CD4-positive, alpha-beta T cell (primary cell): ENCODE measurements at regions of chr1 and their contacts with region 1.

Region 1: GRCh38 chr1:113759333-113760101 is at the start of gene PHTF1:
- DNase-seq: peak; percentile 20 to 82 (median 46)
- ATAC-seq: peak; percentile 68
- H3K4me3 ChIP-seq: peak within 1 kb of the TSS; percentile 91
- H3K4me3 Mint-ChIP-seq: peak within 1 kb of the TSS; percentile 95
- H3K27ac ChIP-seq: peak within 1 kb of the TSS; percentile 57 to 81
- H3K27ac Mint-ChIP-seq: peak within 1 kb of the TSS; percentile 80
- H3K4me1 ChIP-seq: peaks cover 20% of the 10 kb centered on the region
- H3K4me1 Mint-ChIP-seq: peaks cover 41% of the 10 kb centered on the region
- H3K27me3 ChIP-seq: no peaks in the 10 kb centered on the region
- H3K27me3 Mint-ChIP-seq: no peaks in the 10 kb centered on the region
- CTCF ChIP-seq: no peak
- total RNA-seq, gene PHTF1: 3.1 to 4.0 TPM

Region 2: DNA sequence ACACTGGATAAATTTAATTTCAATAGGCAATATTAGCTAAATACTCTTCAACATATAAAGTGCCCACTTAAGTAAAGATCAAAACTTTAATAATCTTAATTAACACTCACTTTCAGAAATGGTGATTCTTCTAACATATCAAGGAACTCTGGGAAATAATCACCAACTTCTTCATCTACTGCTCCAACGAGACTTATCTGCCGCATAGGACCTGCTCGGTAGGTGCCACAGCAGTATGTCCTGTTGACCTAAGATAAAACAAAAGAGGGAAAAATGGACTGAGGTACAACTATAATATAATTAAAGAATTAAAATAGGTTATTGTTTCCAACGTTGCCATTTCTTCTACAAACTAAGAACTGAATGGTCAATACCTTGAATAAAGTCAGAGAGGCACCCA is 18.0 kb after region 1 on chr1:
- CTCF ChIA-PET with region 1: interaction called, 4 read pairs
- POLR2A ChIA-PET with region 1: interaction called, 25 read pairs
- intact Hi-C with region 1: loop called (anchors 2 kb)
- DNase-seq: no peak
- ATAC-seq: no peak
- H3K4me3 ChIP-seq: no peak overlapping the region
- H3K4me3 Mint-ChIP-seq: no peak overlapping the region
- H3K27ac ChIP-seq: no peak overlapping the region
- H3K27ac Mint-ChIP-seq: no peak overlapping the region
- H3K4me1 ChIP-seq: peaks cover 22% of the 10 kb centered on the region
- H3K4me1 Mint-ChIP-seq: peaks cover 5% of the 10 kb centered on the region
- H3K27me3 ChIP-seq: no peaks in the 10 kb centered on the region
- H3K27me3 Mint-ChIP-seq: no peaks in the 10 kb centered on the region
- CTCF ChIP-seq: no peak

Region 3: GRCh38 chr1:113783254-113784099 is 24.0 kb after region 1 on chr1:
- CTCF ChIA-PET with region 1: interaction called, 4 read pairs
- POLR2A ChIA-PET with region 1: interaction called, 25 read pairs
- intact Hi-C with region 1: loop called in 1 of 2 experiments (anchors 2 kb)
- DNase-seq: peak in 10 of 14 experiments; percentile 15 to 90 (median 44)
- ATAC-seq: peak; percentile 92
- H3K4me3 ChIP-seq: peak overlapping the region; percentile 11
- H3K4me3 Mint-ChIP-seq: peak overlapping the region; percentile 49
- H3K27ac ChIP-seq: peak overlapping the region; percentile 67 to 80
- H3K27ac Mint-ChIP-seq: no peak overlapping the region
- H3K4me1 ChIP-seq: peaks cover 37% of the 10 kb centered on the region
- H3K4me1 Mint-ChIP-seq: peaks cover 30% of the 10 kb centered on the region
- H3K27me3 ChIP-seq: no peaks in the 10 kb centered on the region
- H3K27me3 Mint-ChIP-seq: no peaks in the 10 kb centered on the region
- CTCF ChIP-seq: no peak

Region 4: GRCh38 chr1:114263343-114263742 is 503.8 kb after region 1 on chr1:
- CTCF ChIA-PET with region 1: no interaction called
- POLR2A ChIA-PET with region 1: no interaction called
- intact Hi-C with region 1: no loop called
- DNase-seq: no peak
- ATAC-seq: no peak
- H3K4me3 ChIP-seq: no peak overlapping the region
- H3K4me3 Mint-ChIP-seq: no peak overlapping the region
- H3K27ac ChIP-seq: no peak overlapping the region
- H3K27ac Mint-ChIP-seq: no peak overlapping the region
- H3K4me1 ChIP-seq: no peaks in the 10 kb centered on the region
- H3K4me1 Mint-ChIP-seq: no peaks in the 10 kb centered on the region
- H3K27me3 ChIP-seq: peaks cover 3 to 10% of the 10 kb centered on the region in 2 experiments
- H3K27me3 Mint-ChIP-seq: peaks cover 21% of the 10 kb centered on the region
- CTCF ChIP-seq: no peak